B cell (primary cell): ENCODE measurements at regions of chr7 and their contacts with region 1.

Region 1: GRCh38 chr7:121994625-121995410 is 121.9 kb downstream of the PTPRZ1 start:
- DNase-seq: peak; percentile 53
- ATAC-seq: peak; percentile 74
- H3K4me3 ChIP-seq: no peak overlapping the region
- H3K4me3 Mint-ChIP-seq: no peak overlapping the region
- H3K27ac ChIP-seq: no peak overlapping the region
- H3K27ac Mint-ChIP-seq: no peak overlapping the region
- H3K4me1 ChIP-seq: no peaks in the 10 kb centered on the region
- H3K4me1 Mint-ChIP-seq: no peaks in the 10 kb centered on the region
- H3K27me3 ChIP-seq: no peaks in the 10 kb centered on the region
- H3K27me3 Mint-ChIP-seq: peaks cover 3% of the 10 kb centered on the region
- CTCF ChIP-seq: peak; percentile 91

Region 2: GRCh38 chr7:121500360-121501058 is 494.3 kb before region 1 on chr7:
- CTCF ChIA-PET with region 1: no interaction called
- POLR2A ChIA-PET with region 1: no interaction called
- intact Hi-C with region 1: no loop called
- DNase-seq: no peak
- ATAC-seq: no peak
- H3K4me3 ChIP-seq: no peak overlapping the region
- H3K4me3 Mint-ChIP-seq: no peak overlapping the region
- H3K27ac ChIP-seq: no peak overlapping the region
- H3K27ac Mint-ChIP-seq: no peak overlapping the region
- H3K4me1 ChIP-seq: peaks cover 0 to under 1% of the 10 kb centered on the region in 2 donors
- H3K4me1 Mint-ChIP-seq: peaks cover 6% of the 10 kb centered on the region
- H3K27me3 ChIP-seq: no peaks in the 10 kb centered on the region
- H3K27me3 Mint-ChIP-seq: no peaks in the 10 kb centered on the region
- CTCF ChIP-seq: no peak

Region 3: GRCh38 chr7:121909716-121910345 is 85.0 kb before region 1 on chr7:
- CTCF ChIA-PET with region 1: no interaction called
- POLR2A ChIA-PET with region 1: no interaction called
- intact Hi-C with region 1: no loop called
- DNase-seq: no peak
- ATAC-seq: no peak
- H3K4me3 ChIP-seq: no peak overlapping the region
- H3K4me3 Mint-ChIP-seq: no peak overlapping the region
- H3K27ac ChIP-seq: no peak overlapping the region
- H3K27ac Mint-ChIP-seq: no peak overlapping the region
- H3K4me1 ChIP-seq: no peaks in the 10 kb centered on the region
- H3K4me1 Mint-ChIP-seq: no peaks in the 10 kb centered on the region
- H3K27me3 ChIP-seq: no peaks in the 10 kb centered on the region
- H3K27me3 Mint-ChIP-seq: no peaks in the 10 kb centered on the region
- CTCF ChIP-seq: no peak

Region 4: DNA sequence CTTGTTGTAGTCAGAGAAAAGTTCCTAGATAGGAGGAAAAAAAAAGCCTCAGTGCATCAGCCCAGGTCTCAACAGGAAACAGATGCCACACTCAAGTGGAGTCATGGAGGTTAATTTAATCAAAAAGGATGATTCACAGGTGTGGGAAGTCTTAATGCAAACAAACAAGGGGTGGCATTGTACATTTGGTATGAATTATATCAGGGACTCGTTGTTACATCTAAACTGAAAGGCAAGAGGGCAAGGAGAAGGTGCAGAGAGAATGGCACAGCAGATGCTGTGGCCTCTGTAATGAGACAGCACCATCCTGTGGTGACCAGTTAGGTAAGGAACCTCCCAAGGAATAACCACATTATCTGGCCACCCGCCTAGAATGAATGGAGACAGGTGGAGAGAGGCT is 11.9 kb after region 1 on chr7:
- CTCF ChIA-PET with region 1: interaction called, 24 read pairs
- POLR2A ChIA-PET with region 1: no interaction called
- intact Hi-C with region 1: no loop called
- DNase-seq: no peak
- ATAC-seq: no peak
- H3K4me3 ChIP-seq: no peak overlapping the region
- H3K4me3 Mint-ChIP-seq: no peak overlapping the region
- H3K27ac ChIP-seq: no peak overlapping the region
- H3K27ac Mint-ChIP-seq: no peak overlapping the region
- H3K4me1 ChIP-seq: no peaks in the 10 kb centered on the region
- H3K4me1 Mint-ChIP-seq: no peaks in the 10 kb centered on the region
- H3K27me3 ChIP-seq: no peaks in the 10 kb centered on the region
- H3K27me3 Mint-ChIP-seq: peaks cover 3% of the 10 kb centered on the region
- CTCF ChIP-seq: no peak